ENCODE measurements at regions of chr7 and their contacts with region 1.

Region 1: GRCh38 chr7:44973610-44974401 is 5.0 kb downstream of the MYO1G start:
- DNase-seq: peak; percentile 66
- H3K4me3 Mint-ChIP-seq: peak overlapping the region; percentile 43
- H3K27ac Mint-ChIP-seq: peak overlapping the region; percentile 44
- H3K4me1 Mint-ChIP-seq: peaks cover 55% of the 10 kb centered on the region
- H3K27me3 Mint-ChIP-seq: no peaks in the 10 kb centered on the region

Region 2: GRCh38 chr7:44650772-44651171 is 323.0 kb before region 1 on chr7:
- CTCF ChIA-PET with region 1: no interaction called
- POLR2A ChIA-PET with region 1: no interaction called
- DNase-seq: no peak
- H3K4me3 Mint-ChIP-seq: no peak overlapping the region
- H3K27ac Mint-ChIP-seq: peak overlapping the region; percentile 28
- H3K4me1 Mint-ChIP-seq: peaks cover 2% of the 10 kb centered on the region
- H3K27me3 Mint-ChIP-seq: no peaks in the 10 kb centered on the region

Region 3: GRCh38 chr7:44875241-44875640 is 98.6 kb before region 1 on chr7:
- CTCF ChIA-PET with region 1: no interaction called
- POLR2A ChIA-PET with region 1: no interaction called
- DNase-seq: no peak
- H3K4me3 Mint-ChIP-seq: no peak overlapping the region
- H3K27ac Mint-ChIP-seq: no peak overlapping the region
- H3K4me1 Mint-ChIP-seq: peaks cover 11% of the 10 kb centered on the region
- H3K27me3 Mint-ChIP-seq: no peaks in the 10 kb centered on the region

Region 4: GRCh38 chr7:44955733-44956132 is 18.1 kb before region 1 on chr7:
- CTCF ChIA-PET with region 1: interaction called, 6 read pairs
- POLR2A ChIA-PET with region 1: interaction called, 517 read pairs
- DNase-seq: no peak
- H3K4me3 Mint-ChIP-seq: no peak overlapping the region
- H3K27ac Mint-ChIP-seq: no peak overlapping the region
- H3K4me1 Mint-ChIP-seq: peaks cover 20% of the 10 kb centered on the region
- H3K27me3 Mint-ChIP-seq: peaks cover 28% of the 10 kb centered on the region

Region 5: DNA sequence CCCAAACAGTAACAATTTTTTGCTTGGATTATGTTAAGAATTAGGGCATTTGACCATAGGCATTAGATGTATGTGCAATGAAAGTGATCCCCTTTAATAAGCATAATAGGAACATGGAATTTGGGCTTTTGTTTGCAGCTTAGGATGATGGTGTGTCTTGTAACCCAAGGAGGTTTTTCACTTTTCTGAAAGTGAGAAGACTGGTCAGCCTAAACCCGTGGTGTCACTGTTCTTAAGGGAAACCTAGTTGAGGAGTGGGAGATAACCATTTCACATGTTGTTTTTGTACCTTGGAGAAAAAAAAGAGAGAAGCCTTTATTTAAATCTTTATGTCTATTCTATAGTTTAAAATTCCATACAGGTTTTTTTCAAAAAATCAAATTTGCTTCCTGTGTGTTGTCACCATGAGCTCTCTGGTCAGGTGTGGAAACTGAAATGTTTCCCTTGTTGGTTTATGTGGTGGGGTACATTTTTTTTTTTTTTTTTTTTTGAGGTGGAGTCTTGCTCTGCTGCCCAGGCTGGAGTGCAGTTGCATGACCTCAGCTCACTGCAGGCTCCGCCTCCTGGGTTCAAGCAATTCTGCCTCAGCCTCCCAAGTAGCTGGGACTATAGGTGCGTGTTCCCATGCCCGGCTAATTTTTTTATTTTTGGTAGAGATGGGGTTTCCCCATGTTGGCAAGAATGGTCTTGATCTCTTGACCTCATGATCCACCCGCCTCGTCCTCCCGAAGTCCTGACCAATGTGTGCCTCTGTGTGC is 33.9 kb after region 1 on chr7:
- CTCF ChIA-PET with region 1: interaction called, 88 read pairs
- POLR2A ChIA-PET with region 1: interaction called, 493 read pairs
- DNase-seq: peak; percentile 58
- H3K4me3 Mint-ChIP-seq: peak overlapping the region; percentile 50
- H3K27ac Mint-ChIP-seq: peak overlapping the region; percentile 70
- H3K4me1 Mint-ChIP-seq: peaks cover 52% of the 10 kb centered on the region
- H3K27me3 Mint-ChIP-seq: no peaks in the 10 kb centered on the region

Region 6: DNA sequence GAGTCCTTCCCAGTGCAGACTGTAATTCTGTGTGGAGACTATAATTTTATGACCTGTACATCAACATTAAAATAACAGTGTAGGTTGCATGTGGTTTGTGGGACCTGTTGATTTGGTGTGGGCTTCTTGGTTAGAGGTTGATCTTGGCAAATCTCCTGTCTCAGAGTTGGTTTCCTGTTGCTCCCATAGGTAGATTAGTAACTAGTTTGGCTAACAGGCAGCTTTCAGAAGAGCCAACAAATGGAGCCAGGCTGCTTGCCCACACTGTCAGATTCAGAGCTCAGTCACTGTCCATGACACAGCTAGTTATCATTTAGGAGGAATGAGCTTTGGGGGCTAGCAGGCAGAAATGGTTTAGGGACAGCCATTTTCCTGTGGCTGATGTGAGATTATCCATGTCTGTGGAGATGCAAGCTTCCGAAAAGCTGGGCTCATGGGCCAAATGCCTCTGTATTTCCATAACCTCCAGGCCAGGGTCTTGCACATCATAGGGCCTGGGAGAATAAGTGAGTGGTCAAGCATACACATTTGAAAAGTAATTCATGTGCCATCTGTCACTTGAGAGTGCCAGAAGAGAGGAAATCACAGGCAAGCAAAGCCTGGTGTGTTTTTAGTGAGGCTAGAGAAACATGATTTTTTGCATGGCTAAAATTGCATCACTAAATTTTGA is 59.6 kb after region 1 on chr7:
- CTCF ChIA-PET with region 1: interaction called, 36 read pairs
- POLR2A ChIA-PET with region 1: interaction called, 412 read pairs
- DNase-seq: peak; percentile 28
- H3K4me3 Mint-ChIP-seq: peak overlapping the region; percentile 55
- H3K27ac Mint-ChIP-seq: peak overlapping the region; percentile 79
- H3K4me1 Mint-ChIP-seq: peaks cover 78% of the 10 kb centered on the region
- H3K27me3 Mint-ChIP-seq: no peaks in the 10 kb centered on the region

Region 7: GRCh38 chr7:45122975-45123860 is 149.4 kb after region 1 on chr7:
- CTCF ChIA-PET with region 1: interaction called, 4 read pairs
- POLR2A ChIA-PET with region 1: interaction called, 17 read pairs
- DNase-seq: peak; percentile 49
- H3K4me3 Mint-ChIP-seq: peak overlapping the region; percentile 55
- H3K27ac Mint-ChIP-seq: peak overlapping the region; percentile 93
- H3K4me1 Mint-ChIP-seq: peaks cover 31% of the 10 kb centered on the region
- H3K27me3 Mint-ChIP-seq: no peaks in the 10 kb centered on the region

Measured in activated CD4-positive, alpha-beta memory T cell treated with anti-CD3 and anti-CD28 coated beads, Interleukin-2, amount 10 ng/mL, durations not matched to agents 7 days and 5 days (primary cell).